ENCODE measurements at regions of chr16 and their contacts with region 1.

Region 1: GRCh38 chr16:31754998-31755615 is 118.5 kb upstream of the ZNF267 start:
- DNase-seq: no peak
- ATAC-seq: no peak
- H3K4me3 Mint-ChIP-seq: no peak overlapping the region
- H3K27ac Mint-ChIP-seq: no peak overlapping the region
- H3K4me1 Mint-ChIP-seq: no peaks in the 10 kb centered on the region
- H3K27me3 Mint-ChIP-seq: no peaks in the 10 kb centered on the region

Region 2: GRCh38 chr16:31354394-31355291 is 400.5 kb before region 1 on chr16 and contains the start of gene ITGAX:
- CTCF ChIA-PET with region 1: no interaction called
- POLR2A ChIA-PET with region 1: no interaction called
- intact Hi-C with region 1: no loop called
- DNase-seq: peak; percentile 91
- ATAC-seq: peak; percentile 86
- H3K4me3 Mint-ChIP-seq: peak within 1 kb of the TSS; percentile 12
- H3K27ac Mint-ChIP-seq: peak within 1 kb of the TSS; percentile 85
- H3K4me1 Mint-ChIP-seq: peaks cover 31% of the 10 kb centered on the region
- H3K27me3 Mint-ChIP-seq: peaks cover 8% of the 10 kb centered on the region
- total RNA-seq, gene ITGAX: 5.3 to 6.6 TPM

Region 3: GRCh38 chr16:31819386-31819785 is 64.3 kb after region 1 on chr16:
- CTCF ChIA-PET with region 1: no interaction called
- POLR2A ChIA-PET with region 1: no interaction called
- intact Hi-C with region 1: loop called in 1 of 2 experiments (anchors 10 kb)
- DNase-seq: no peak
- ATAC-seq: no peak
- H3K4me3 Mint-ChIP-seq: no peak overlapping the region
- H3K27ac Mint-ChIP-seq: no peak overlapping the region
- H3K4me1 Mint-ChIP-seq: no peaks in the 10 kb centered on the region
- H3K27me3 Mint-ChIP-seq: peaks cover 9% of the 10 kb centered on the region

Region 4: GRCh38 chr16:31916056-31916488 is 161.0 kb after region 1 on chr16:
- CTCF ChIA-PET with region 1: no interaction called
- POLR2A ChIA-PET with region 1: no interaction called
- intact Hi-C with region 1: loop called in 1 of 2 experiments (anchors 2 kb)
- DNase-seq: no peak
- ATAC-seq: peak; percentile 8
- H3K4me3 Mint-ChIP-seq: no peak overlapping the region
- H3K27ac Mint-ChIP-seq: no peak overlapping the region
- H3K4me1 Mint-ChIP-seq: peaks cover 14% of the 10 kb centered on the region
- H3K27me3 Mint-ChIP-seq: no peaks in the 10 kb centered on the region